ENCODE measurements at regions of chr17 and their contacts with region 1.

Region 1: GRCh38 chr17:75205037-75205792 is at the start of gene NUP85:
- DNase-seq: peak; percentile 80 to 97 (median 89)
- H3K4me3 ChIP-seq: peak within 1 kb of the TSS; percentile 68 to 100 (median 94)
- H3K27ac ChIP-seq: peak within 1 kb of the TSS; percentile 94 to 100 (median 99)
- H3K27me3 ChIP-seq: no peaks in the 10 kb centered on the region
- CTCF ChIP-seq: peak in 26 of 56 donors; percentile 8 to 51 (median 22)
- total RNA-seq, gene NUP85: 31.2 to 80.8 (median 50.2) TPM

Region 2: DNA sequence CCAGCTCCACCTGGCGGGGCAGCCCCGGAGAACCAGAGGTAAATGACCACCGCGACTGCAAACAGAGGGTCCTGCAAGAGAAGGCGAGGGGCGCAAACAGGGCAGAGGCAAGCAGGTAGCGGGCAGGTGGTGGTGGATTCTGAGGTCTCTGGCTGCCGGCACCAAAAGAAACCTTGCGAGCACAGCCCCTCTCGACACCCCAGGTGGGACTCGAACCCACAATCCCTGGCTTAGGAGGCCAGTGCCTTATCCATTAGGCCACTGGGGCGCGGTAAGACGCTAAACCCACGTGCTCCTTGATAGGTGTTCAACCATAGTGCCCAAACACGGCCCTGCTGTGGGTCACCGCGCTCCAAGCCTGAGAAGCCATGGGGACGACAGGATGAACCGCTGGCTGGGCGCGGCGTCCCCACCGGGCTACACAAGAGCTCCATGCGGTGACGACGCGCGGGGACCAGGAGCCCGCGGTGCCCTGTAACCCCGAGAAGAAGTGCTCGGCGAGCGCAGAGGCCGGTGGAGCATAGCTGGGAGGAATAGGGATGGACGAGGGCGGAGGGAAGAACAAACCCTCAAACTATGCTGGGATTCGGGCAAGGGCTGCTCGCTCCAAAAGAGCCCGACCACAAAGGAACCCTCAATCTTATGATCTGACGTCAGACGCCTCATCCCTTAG is 170.8 kb before region 1 on chr17:
- intact Hi-C with region 1: loop called in 1 of 2 experiments (anchors 10 kb)
- DNase-seq: peak; percentile 78 to 94 (median 87)
- H3K4me3 ChIP-seq: peak overlapping the region; percentile 44 to 97 (median 80)
- H3K27ac ChIP-seq: peak overlapping the region; percentile 60 to 99 (median 97)
- H3K27me3 ChIP-seq: no peaks in the 10 kb centered on the region
- CTCF ChIP-seq: peak in 1 of 56 donors; percentile 11

Region 3: GRCh38 chr17:75182569-75183450 is 22.4 kb before region 1 on chr17 and contains the start of gene SUMO2:
- intact Hi-C with region 1: loop called in 1 of 2 experiments (anchors 1 kb)
- DNase-seq: peak; percentile 77 to 90 (median 86)
- H3K4me3 ChIP-seq: peak within 1 kb of the TSS; percentile 65 to 98 (median 89)
- H3K27ac ChIP-seq: peak within 1 kb of the TSS; percentile 86 to 100 (median 99)
- H3K27me3 ChIP-seq: no peaks in the 10 kb centered on the region
- CTCF ChIP-seq: peak in 26 of 56 donors; percentile 1 to 53 (median 24)
- total RNA-seq, gene SUMO2: 161 to 320 (median 250) TPM

Region 4: GRCh38 chr17:75271233-75271954 is 66.2 kb after region 1 on chr17:
- intact Hi-C with region 1: loop called in 1 of 2 experiments (anchors 2 kb)
- DNase-seq: peak; percentile 40 to 87 (median 70)
- H3K4me3 ChIP-seq: peak overlapping the region; percentile 62 to 98 (median 91)
- H3K27ac ChIP-seq: peak overlapping the region in 56 of 59 donors; percentile 10 to 97 (median 84)
- H3K27me3 ChIP-seq: no peaks in the 10 kb centered on the region
- CTCF ChIP-seq: peak; percentile 34 to 94 (median 73)

Measured in dorsolateral prefrontal cortex (tissue), 120 donors.